ENCODE measurements at regions of chr14 and their contacts with region 1.

Region 1: DNA sequence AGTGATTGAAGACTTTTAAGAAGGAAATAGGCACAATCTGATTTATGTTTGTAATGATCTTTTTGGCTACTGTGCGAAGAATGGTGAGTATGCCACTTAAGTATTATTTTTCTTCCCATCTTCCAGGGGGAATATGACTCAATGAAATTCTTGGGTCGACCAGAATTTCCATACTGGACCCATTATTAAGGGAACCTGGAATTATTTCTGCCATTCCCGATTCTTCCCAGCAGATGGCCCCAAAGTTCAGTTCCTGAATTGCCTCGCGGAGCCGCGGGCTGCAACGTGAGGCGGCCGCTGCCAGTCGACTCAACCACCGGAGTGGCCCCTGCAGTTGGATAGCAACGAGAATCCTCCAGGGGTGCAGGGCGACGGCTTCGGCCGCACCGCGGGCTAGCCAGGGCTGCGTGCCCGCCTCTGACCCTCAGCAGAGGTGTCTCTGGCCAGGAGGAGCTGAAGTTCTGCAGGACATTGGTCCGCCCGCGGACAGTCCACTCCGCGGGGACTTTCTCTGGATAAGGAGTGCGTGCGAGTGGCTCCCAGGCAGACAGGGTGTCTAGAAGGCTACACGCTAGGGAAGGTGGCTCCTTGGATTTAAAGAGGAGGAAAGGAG is 628 bp upstream of the TSHR start:
- DNase-seq: peak; percentile 81
- H3K4me3 Mint-ChIP-seq: peak overlapping the region; percentile 75
- H3K27ac Mint-ChIP-seq: no peak overlapping the region
- H3K4me1 Mint-ChIP-seq: peaks cover 32% of the 10 kb centered on the region
- H3K27me3 Mint-ChIP-seq: peaks cover 10% of the 10 kb centered on the region

Region 2: DNA sequence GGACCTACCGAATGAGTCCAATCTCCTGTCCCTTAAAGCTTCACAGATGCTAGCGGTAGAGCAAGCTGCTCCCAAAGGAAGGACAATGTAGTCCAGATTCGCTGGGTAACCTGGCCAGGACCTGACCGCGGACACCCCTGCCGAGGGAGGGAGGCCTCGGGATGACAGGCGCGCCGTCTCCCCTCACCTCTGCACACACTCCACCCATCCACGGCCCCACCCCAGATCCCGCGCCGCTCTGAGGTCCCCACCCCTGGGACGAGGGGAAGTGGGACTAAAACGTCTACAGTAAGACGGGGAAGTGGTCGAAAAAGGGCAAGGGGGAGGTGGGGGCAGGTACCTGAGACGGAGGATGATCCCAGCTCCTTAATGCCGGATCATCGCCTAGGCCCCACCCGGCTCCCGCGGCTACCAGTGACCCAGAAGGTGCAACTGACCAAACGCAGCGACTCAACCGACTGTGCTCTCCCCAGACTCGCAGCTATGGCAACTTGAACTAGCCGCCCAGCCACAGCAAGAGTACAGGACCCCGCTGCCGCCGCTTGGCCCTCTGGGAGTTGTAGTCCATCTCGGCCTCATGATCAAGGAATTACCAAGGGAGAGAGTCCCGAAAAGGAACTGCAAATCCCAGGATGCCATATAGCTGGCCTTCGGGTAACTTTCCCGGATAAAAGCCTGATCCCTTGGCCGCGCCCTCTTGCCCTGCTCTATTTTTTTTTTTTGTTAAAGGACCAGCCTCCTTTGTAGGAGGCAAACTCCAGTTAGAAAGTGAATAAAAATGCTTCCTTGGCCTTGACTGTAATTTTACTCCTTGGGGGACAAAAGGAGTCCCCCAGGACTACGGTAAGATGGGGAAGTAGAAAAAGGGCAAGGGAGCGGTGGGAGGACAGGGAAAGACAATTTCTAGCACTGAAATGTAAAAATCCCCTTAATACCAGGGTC is 13.3 kb before region 1 on chr14 and contains the start of gene CEP128:
- CTCF ChIA-PET with region 1: interaction called, 6 read pairs
- intact Hi-C with region 1: loop called (anchors 1 kb)
- DNase-seq: peak; percentile 90
- H3K4me3 Mint-ChIP-seq: peak within 1 kb of the TSS; percentile 86
- H3K27ac Mint-ChIP-seq: peak within 1 kb of the TSS; percentile 88
- H3K4me1 Mint-ChIP-seq: peaks cover 38% of the 10 kb centered on the region
- H3K27me3 Mint-ChIP-seq: no peaks in the 10 kb centered on the region
- total RNA-seq, gene CEP128: 16.4 to 17.1 TPM

Region 3: DNA sequence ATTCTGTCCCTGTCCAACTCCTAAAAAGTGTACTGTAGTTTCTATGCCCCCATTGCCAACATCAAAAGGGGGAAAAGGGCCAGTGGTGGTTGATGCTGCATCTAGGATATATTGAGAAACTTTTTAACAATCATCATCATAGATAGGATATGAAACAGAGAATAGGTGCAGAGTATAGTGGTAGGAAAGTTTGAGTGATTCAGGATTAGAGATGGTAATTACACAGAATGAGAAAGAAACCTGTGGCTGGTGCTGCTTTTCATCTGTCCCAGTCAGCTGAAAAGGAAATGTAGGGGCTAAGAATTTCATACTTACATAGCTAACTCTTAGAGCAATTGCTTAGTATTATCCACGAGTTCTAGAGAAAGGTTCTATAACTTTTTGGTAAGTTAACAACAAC is 198.4 kb after region 1 on chr14:
- CTCF ChIA-PET with region 1: no interaction called
- intact Hi-C with region 1: loop called (anchors 1 kb)
- DNase-seq: peak; percentile 31
- H3K4me3 Mint-ChIP-seq: no peak overlapping the region
- H3K27ac Mint-ChIP-seq: no peak overlapping the region
- H3K4me1 Mint-ChIP-seq: peaks cover 18% of the 10 kb centered on the region
- H3K27me3 Mint-ChIP-seq: peaks cover 10% of the 10 kb centered on the region

Region 4: GRCh38 chr14:81453166-81453766 is 498.5 kb after region 1 on chr14:
- CTCF ChIA-PET with region 1: no interaction called
- intact Hi-C with region 1: loop called (anchors 1 kb)
- DNase-seq: peak; percentile 69
- H3K4me3 Mint-ChIP-seq: no peak overlapping the region
- H3K27ac Mint-ChIP-seq: no peak overlapping the region
- H3K4me1 Mint-ChIP-seq: peaks cover 13% of the 10 kb centered on the region
- H3K27me3 Mint-ChIP-seq: peaks cover 11% of the 10 kb centered on the region